ENCODE measurements at regions of chr4 and their contacts with region 1.

Region 1: DNA sequence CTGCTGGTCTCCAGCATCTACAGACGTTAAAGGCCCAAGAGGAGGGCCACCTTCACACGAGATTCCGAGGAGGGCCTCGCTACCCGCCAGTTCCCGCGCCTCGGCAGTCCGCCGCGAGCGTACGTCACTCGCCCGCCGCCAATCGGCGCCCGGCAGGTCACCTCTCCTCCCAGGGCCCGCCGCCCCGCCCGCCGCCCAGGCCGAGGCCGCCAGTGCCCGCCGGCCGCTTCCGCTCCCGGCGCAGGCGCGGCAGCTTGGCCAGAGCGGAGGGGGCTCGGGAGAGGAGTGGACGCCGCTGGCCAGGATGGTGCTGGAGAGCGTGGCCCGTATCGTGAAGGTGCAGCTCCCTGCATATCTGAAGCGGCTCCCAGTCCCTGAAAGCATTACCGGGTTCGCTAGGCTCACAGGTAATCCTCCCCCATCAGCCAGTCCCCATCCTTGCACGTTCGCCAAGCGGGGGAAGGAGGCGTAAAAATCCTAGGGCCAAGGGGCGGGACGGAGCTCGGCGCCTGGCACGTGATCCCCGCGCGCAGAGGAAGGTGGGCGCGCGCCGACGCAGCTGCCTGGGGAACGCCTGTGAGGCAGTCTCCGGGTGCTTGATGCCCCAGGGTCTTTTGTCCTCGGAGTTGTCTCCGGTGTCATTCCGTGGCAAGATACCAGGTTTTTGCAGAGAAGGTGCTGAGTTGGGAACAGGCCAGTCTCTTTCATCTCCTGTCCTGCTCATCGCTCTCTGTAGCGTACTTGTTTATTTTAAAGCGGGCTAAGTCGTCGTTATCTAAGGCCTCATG is at the start of gene CISD2:
- DNase-seq: peak; percentile 91 to 96 (median 94)
- ATAC-seq: peak; percentile 94 to 99 (median 98)
- H3K4me3 ChIP-seq: peak within 1 kb of the TSS; percentile 66 to 93 (median 72)
- H3K27ac ChIP-seq: peak within 1 kb of the TSS; percentile 79 to 99 (median 96)
- H3K4me1 ChIP-seq: peaks cover 0 to 38% (median 19%) of the 10 kb centered on the region in 12 donors
- H3K27me3 ChIP-seq: no peaks in the 10 kb centered on the region
- CTCF ChIP-seq: no peak
- POLR2A ChIP-seq: peak in 1 of 2 donors; percentile 72
- total RNA-seq, gene CISD2: 9.0 to 22.3 (median 18.4) TPM

Region 2: DNA sequence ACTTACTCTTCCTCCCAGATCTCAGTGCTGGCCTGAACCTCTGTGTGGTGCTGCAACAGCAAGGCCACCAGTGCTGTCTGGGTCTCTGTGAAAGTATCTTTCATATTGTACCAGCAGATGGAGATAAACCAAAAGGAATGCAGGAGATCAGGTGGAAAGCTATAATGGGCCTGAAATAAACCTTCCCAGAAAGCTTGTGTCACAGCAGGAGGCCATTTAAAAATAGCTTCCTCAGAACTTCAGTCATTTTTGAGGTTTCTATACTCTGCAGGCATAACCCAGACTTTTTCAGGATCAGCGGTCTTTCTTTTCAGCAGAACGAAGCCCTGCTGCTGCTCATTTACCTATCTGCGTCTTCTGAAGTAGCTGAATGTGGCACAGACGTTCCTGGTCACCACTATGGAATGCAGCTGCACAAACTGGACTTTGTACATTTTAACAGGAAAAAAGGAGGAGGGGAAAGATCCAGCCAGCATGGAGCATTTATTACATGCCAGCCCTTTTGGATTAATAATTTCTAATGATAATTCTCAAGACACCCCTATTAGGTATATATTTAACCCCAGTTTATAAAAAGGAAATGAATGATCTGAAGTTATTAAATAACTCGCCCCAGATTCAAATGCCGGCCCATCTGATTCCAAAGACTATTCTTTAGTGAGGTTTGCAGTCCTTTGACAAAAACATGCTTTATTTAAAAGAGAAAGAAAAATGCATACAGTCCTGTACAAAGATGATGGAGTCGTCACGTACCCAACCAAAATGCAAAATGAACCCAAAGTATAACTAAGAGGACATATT is 248.1 kb before region 1 on chr4:
- intact Hi-C with region 1: loop called in 1 of 10 experiments (anchors 5 kb)
- DNase-seq: no peak
- ATAC-seq: peak; percentile 91 to 95 (median 92)
- H3K4me3 ChIP-seq: peak overlapping the region in 7 of 12 donors; percentile 1 to 35 (median 17)
- H3K27ac ChIP-seq: peak overlapping the region in 1 of 12 donors; percentile 58
- H3K4me1 ChIP-seq: peaks cover 0 to 19% (median 4%) of the 10 kb centered on the region in 12 donors
- H3K27me3 ChIP-seq: no peaks in the 10 kb centered on the region
- CTCF ChIP-seq: peak; percentile 18 to 64 (median 46)
- POLR2A ChIP-seq: no peak

Region 3: GRCh38 chr4:102826890-102827673 is 41.9 kb before region 1 on chr4 and contains the start of gene UBE2D3:
- intact Hi-C with region 1: loop called (anchors 1 to 2 kb)
- DNase-seq: peak; percentile 94 to 97 (median 95)
- ATAC-seq: peak; percentile 59 to 78 (median 74)
- H3K4me3 ChIP-seq: peak within 1 kb of the TSS; percentile 83 to 99 (median 91)
- H3K27ac ChIP-seq: peak within 1 kb of the TSS; percentile 100
- H3K4me1 ChIP-seq: peaks cover 0 to 46% (median 37%) of the 10 kb centered on the region in 12 donors
- H3K27me3 ChIP-seq: no peaks in the 10 kb centered on the region
- CTCF ChIP-seq: peak in 4 of 12 donors; percentile 16 to 32 (median 22)
- POLR2A ChIP-seq: peak in 1 of 2 donors; percentile 25
- total RNA-seq, gene UBE2D3: 216 to 381 (median 258) TPM

Region 4: DNA sequence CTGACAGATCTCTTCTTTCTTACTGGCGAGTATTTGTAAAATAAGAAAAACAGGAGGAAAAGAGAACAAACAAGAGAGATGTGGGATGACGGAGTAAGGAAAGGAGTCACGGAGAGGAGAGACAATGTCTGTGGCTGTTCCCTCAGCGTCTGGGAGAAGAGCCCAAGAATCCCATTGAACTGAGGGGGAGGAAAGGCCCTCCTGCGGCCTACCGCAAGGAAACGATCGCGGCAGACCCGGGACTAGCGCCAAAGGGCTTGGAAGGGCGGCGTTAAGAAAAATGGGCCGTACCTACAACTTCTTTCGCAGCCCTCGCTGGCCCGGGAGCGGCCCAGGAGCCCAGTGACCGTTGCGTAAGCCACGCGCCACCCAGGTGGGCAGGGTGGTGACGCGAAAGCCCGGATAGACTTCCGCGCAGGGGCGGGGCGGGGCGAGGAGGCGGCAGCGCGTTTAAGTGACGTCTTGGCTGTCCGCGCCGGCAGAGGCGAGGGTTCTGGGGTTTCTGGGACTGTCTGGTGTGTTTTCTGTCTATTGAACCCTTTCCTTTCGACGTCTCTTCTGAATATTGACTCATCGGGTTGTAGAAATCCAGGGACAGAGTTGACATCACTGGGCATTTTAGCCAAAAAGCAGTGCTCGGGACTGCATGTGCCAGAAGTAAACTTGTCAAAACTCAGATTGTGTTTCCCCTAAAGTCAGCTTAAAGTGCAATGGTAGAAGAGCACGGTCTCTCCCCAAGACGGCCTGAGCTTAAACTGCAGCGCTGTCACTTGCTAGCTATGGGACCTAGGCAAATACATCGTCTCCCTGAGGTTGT is 150.5 kb after region 1 on chr4 and contains the start of gene SLC9B1:
- intact Hi-C with region 1: loop called in 2 of 10 experiments (anchors 5 kb)
- DNase-seq: peak; percentile 95 to 97 (median 96)
- ATAC-seq: peak; percentile 99 to 100 (median 100)
- H3K4me3 ChIP-seq: peak within 1 kb of the TSS; percentile 30 to 67 (median 59)
- H3K27ac ChIP-seq: peak within 1 kb of the TSS; percentile 65 to 92 (median 88)
- H3K4me1 ChIP-seq: peaks cover 0 to 18% (median 5%) of the 10 kb centered on the region in 12 donors
- H3K27me3 ChIP-seq: no peaks in the 10 kb centered on the region
- CTCF ChIP-seq: no peak
- POLR2A ChIP-seq: peak in 1 of 2 donors; percentile 69
- total RNA-seq, gene SLC9B1: 0.28 to 1.8 (median 0.61) TPM in 6 of 9 donors, not detected in the others